ENCODE measurements at regions of chr19 and their contacts with region 1.

Region 1: GRCh38 chr19:29714953-29715700 is at the start of gene C19orf12:
- DNase-seq: no peak
- H3K4me3 ChIP-seq: peak within 1 kb of the TSS; percentile 82
- CTCF ChIP-seq: no peak

Region 2: DNA sequence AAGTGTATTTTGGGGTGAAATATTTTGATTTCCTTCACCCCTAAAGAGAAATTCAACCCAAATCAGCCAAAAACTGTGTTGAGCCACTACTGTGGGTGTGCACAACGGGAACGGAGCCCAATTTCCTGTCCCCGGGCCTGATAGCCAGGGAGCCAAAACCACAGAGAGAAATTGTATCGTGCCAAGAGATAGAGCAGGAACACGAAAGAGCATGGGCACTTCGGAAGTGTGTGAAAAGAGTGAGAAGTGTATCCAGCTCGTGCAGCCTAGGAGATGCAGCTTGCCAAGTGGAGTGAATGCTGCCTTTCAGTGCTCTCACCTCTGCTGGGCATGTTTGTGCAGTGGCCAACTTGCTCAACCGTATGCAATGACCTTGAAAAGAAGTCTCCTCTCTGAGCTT is 69.2 kb before region 1 on chr19:
- CTCF ChIA-PET with region 1: interaction called, 22 read pairs
- POLR2A ChIA-PET with region 1: no interaction called
- DNase-seq: no peak
- H3K4me3 ChIP-seq: no peak overlapping the region
- CTCF ChIP-seq: no peak

Region 3: DNA sequence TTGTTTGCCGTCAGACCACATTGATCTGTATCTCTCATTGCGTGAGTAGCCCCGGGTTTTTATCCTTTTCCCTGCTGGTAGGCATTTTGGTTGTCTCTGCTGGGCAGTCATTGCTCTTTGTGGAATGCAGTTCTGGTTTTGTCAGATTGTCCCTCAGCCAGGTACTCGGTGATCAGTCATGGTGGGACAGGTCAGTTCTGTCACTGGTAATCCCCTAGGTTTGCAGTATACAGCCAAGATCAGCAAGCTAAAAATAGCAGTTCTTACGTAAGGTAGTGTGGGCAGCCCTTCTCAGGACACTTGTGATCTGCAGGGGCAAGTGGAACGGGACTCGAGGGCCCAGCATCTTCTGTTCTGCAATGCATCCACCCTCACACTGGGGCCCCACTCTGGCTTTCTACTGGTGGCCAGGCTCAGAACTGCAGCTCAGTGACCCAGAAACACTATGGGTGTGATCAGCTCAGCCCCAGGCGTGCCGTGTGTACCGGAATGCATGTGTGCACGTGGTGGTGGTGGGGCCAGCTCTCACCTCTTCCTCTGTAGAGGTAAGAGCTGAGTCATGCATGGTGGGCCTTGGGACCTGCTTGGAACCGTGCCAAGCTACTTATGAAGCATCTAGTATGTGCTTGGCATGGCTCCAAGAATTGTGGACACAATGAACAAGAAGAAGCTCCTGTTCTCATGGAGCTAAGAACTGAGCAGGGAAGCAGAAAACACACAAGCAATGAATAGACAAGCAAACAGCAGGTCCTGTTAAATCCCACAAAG is 43.5 kb before region 1 on chr19:
- CTCF ChIA-PET with region 1: interaction called, 24 read pairs
- POLR2A ChIA-PET with region 1: no interaction called
- DNase-seq: no peak
- H3K4me3 ChIP-seq: no peak overlapping the region
- CTCF ChIP-seq: no peak

Region 4: GRCh38 chr19:29694669-29695627 is 20.2 kb before region 1 on chr19:
- CTCF ChIA-PET with region 1: interaction called, 87 read pairs
- POLR2A ChIA-PET with region 1: interaction called, 6 read pairs
- DNase-seq: no peak
- H3K4me3 ChIP-seq: no peak overlapping the region
- CTCF ChIP-seq: peak; percentile 97

Region 5: DNA sequence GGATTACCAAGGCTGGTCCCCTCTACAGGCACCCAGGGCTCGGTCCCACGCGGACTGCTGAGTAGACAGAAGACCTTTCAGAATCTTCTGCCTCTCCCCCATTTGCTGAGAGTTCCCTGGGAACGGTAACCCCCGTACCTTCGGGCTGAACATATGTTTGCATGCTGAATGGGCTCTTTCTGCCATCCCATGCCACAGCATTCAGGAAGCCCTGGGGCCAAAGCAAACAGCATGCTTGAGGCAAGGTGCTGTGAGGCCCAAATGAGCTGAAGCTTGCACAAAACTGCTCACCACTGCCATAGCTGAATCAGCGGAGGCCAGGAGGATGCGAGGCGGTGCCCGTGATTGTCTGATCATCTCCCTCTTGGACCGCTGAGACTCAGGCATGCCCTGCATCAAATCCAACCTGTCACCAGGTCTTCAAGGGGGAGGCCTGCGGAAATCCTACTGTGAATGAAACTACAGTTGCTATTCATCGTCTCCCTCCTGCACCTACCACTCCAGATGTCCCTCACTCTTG is 16.3 kb after region 1 on chr19:
- CTCF ChIA-PET with region 1: interaction called, 44 read pairs
- POLR2A ChIA-PET with region 1: no interaction called
- DNase-seq: no peak
- H3K4me3 ChIP-seq: no peak overlapping the region
- CTCF ChIP-seq: no peak

Region 6: GRCh38 chr19:29831686-29832085 is 116.6 kb after region 1 on chr19:
- CTCF ChIA-PET with region 1: no interaction called
- POLR2A ChIA-PET with region 1: no interaction called
- DNase-seq: no peak
- H3K4me3 ChIP-seq: no peak overlapping the region
- CTCF ChIP-seq: no peak